ENCODE measurements at regions of chr1 and their contacts with region 1.

Region 1: DNA sequence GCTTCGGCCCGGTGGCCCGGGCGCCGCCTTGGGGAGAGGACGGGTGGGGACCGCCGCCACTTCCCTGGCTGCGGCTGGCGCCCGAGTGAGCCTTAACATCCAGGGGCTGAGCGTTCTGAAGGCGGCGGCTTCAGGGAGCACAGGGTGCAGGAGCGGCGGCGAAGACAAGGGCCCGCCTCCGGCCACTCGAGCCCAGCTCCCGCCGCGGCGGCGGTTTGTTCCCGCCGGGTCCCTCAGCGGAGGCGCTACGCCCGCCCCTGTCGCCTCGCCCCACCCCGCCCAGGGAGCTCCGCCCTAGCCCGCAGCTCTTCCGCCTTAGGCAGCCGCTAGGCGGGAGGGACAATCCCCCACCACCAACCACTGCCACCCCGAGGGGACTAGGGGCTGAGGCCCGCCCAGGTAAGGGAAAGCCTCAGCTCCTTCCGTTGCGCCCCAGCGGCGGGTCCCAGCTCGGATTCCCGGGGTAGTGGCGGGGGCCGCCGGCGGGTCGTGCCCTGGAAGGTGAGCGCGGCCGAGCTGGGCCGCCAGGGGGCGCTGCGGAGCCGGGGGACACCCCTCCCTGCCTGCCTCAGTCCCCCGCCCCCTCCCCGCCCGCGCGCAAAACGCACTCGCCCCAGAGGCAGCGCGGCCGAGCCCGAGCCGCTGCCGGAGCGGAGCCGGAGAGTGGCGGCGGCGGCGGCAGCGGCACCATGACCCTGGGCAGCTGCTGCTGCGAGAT is at the start of gene FOXD2:
- DNase-seq: peak; percentile 95
- ATAC-seq: peak; percentile 90
- H3K4me3 Mint-ChIP-seq: peak within 1 kb of the TSS; percentile 93
- H3K27ac Mint-ChIP-seq: peak within 1 kb of the TSS; percentile 88
- H3K4me1 Mint-ChIP-seq: peaks cover 34% of the 10 kb centered on the region
- H3K27me3 Mint-ChIP-seq: peaks cover 28% of the 10 kb centered on the region
- total RNA-seq, gene FOXD2: 0.24 to 0.31 TPM

Region 2: DNA sequence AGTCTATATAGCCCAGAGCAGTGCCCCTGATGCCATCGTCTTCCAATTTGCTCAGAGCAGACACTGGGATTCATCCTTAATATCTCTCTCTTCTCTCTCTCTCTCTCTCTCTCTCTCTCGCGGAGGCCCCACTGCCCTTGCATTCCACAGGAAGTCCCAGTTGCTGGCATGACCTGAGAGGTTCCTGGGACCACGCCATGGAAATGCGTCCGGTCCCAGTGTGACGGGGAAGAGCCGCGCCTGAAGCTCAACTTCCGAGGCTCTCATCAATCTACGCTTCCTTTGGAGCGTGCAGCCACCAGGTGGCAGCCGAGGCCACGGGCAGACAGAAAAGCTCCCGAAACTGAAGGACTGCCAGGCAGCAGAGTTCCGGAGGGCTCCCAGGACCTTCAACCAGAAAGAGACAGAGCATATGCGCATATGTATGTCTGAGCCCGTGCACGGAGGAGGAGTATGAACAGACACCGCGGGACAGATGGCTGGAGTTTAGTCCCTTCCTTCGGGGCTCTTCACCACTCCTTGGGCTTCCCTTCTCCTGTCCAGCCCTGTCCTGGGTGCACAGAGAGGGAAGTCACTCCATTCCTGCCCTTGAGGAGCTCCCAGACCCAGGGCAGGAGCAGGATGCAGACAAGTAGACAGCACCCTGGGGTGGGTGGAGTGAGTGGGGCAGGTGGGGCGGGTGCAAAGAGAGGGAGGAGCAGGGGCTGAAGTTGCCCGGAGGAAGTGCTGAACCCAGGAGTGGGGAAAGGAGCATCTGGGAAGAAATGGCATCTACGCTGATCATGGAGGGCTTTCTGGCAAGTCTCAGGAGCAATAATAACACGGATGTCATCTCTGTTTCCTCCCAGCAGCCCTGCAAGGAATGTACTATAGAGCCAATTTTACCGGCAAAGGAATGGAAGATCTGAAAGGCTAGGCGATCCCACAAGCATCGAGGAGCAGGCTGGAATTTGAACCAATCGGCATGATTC is 258.3 kb before region 1 on chr1:
- CTCF ChIA-PET with region 1: interaction called, 15 read pairs
- POLR2A ChIA-PET with region 1: no interaction called
- DNase-seq: peak; percentile 85
- ATAC-seq: peak; percentile 85
- H3K4me3 Mint-ChIP-seq: peak overlapping the region; percentile 80
- H3K27ac Mint-ChIP-seq: peak overlapping the region; percentile 88
- H3K4me1 Mint-ChIP-seq: peaks cover 8% of the 10 kb centered on the region
- H3K27me3 Mint-ChIP-seq: peaks cover 26% of the 10 kb centered on the region

Region 3: GRCh38 chr1:47409311-47410070 is 28.1 kb before region 1 on chr1:
- CTCF ChIA-PET with region 1: interaction called, 14 read pairs
- POLR2A ChIA-PET with region 1: no interaction called
- DNase-seq: no peak
- ATAC-seq: no peak
- H3K4me3 Mint-ChIP-seq: no peak overlapping the region
- H3K27ac Mint-ChIP-seq: no peak overlapping the region
- H3K4me1 Mint-ChIP-seq: no peaks in the 10 kb centered on the region
- H3K27me3 Mint-ChIP-seq: peaks cover 35% of the 10 kb centered on the region

Region 4: DNA sequence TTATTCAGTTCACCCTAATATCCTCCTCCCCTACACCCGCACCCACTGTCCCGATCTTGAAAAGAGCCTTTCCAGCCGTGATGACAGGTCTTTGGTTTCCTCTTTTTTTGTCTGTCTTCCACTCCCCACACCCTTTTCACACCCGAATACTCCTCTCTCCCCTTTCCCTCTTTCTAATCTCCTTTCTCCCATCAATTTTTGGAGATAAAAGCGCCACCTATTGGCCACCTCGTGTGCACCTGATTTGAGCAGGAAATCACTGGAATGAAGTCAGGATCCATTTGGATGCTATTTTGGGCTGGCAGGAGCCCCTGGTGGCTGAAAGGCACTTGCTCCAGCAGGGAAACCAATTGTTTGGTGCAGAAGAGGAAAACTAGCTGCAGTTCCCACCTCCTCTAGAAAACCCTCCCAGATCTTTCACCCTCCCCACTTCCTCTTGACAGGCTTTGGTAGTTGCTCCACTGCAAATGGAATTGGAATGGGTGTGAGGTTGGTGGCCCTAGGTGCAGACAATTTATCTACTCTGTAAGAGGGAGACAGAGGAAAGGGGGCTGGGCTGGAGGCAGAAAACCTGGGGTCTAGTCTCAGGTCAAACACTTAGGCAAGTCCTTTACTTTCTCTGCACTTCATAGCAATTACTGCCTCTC is 13.1 kb before region 1 on chr1:
- CTCF ChIA-PET with region 1: interaction called, 11 read pairs
- POLR2A ChIA-PET with region 1: no interaction called
- DNase-seq: no peak
- ATAC-seq: no peak
- H3K4me3 Mint-ChIP-seq: no peak overlapping the region
- H3K27ac Mint-ChIP-seq: no peak overlapping the region
- H3K4me1 Mint-ChIP-seq: no peaks in the 10 kb centered on the region
- H3K27me3 Mint-ChIP-seq: peaks cover 11% of the 10 kb centered on the region

Region 5: GRCh38 chr1:47478090-47478489 is 40.5 kb after region 1 on chr1:
- CTCF ChIA-PET with region 1: no interaction called
- POLR2A ChIA-PET with region 1: no interaction called
- DNase-seq: no peak
- ATAC-seq: no peak
- H3K4me3 Mint-ChIP-seq: no peak overlapping the region
- H3K27ac Mint-ChIP-seq: no peak overlapping the region
- H3K4me1 Mint-ChIP-seq: no peaks in the 10 kb centered on the region
- H3K27me3 Mint-ChIP-seq: peaks cover 9% of the 10 kb centered on the region

Region 6: GRCh38 chr1:47637111-47637685 is 199.6 kb after region 1 on chr1:
- CTCF ChIA-PET with region 1: no interaction called
- POLR2A ChIA-PET with region 1: no interaction called
- DNase-seq: no peak
- ATAC-seq: no peak
- H3K4me3 Mint-ChIP-seq: no peak overlapping the region
- H3K27ac Mint-ChIP-seq: no peak overlapping the region
- H3K4me1 Mint-ChIP-seq: no peaks in the 10 kb centered on the region
- H3K27me3 Mint-ChIP-seq: peaks cover 3% of the 10 kb centered on the region

Region 7: DNA sequence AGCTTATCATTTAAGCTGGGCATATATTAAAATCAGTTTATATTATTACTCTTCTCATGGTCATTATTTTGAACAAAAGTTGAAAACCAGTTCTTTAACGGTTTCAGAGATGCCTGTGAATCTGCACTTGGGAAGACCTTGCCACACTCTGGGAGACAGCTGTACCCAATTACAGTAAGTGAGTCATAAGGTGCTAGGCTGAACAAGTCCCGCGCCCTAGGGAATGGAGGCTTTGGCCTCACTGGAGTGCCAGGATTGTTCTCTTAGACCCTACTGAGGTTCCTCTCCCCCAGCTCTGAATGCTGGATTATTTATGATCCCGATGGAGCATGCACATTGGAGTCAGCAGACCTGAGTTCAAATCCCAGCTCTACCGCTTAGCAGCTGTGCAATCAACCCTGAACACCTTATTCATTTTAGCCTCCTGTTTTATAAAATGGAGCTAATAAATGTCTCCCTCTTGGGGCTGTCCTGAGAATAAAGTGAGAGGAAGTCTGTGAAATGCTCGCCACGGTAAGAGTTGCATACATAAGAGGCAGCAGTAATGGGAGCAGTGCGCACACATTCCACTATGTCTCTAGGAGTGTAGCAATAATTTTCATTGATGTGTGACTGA is 266.5 kb after region 1 on chr1:
- CTCF ChIA-PET with region 1: interaction called, 71 read pairs
- POLR2A ChIA-PET with region 1: no interaction called
- DNase-seq: no peak
- ATAC-seq: no peak
- H3K4me3 Mint-ChIP-seq: no peak overlapping the region
- H3K27ac Mint-ChIP-seq: no peak overlapping the region
- H3K4me1 Mint-ChIP-seq: peaks cover 1% of the 10 kb centered on the region
- H3K27me3 Mint-ChIP-seq: peaks cover 26% of the 10 kb centered on the region

Region 8: DNA sequence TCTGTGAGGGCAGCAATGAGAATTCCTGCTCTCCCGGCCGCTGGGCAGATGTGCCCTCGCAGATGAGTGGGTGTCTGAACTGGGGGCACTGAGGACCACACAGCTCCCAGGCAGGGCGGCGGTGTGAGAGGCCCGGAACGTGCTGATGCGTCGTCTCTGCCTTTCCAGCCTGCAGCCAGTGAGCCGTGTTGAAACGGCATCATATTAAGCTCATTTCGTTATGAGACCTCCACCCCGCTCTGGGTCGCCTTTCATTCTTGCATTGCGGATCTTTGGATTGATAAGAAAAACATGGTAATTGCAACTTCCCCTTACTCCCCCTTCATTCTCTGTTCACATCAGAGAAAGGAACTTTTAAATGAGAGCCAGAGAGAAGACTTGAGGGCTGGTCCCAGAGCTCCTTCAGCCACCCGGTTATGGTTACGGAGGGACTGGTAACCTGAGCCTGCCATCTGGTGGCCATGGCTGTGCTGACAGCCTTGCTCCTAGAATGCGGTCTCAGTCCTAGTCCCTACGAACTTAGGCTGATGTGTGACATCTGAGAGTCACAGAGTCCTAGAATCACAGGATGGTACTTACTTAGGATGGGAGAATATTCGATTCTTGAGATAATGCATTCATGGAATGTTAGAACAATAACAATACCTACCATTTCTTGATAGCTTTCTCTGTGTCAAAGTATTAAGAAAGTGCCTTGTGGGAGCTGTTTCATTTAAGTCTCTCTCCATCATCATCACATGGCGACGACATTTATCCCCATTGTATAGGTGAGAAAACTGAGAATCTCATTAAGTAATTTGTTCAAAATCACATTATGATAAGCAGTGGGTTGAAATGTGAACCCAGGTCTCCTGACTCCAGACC is 288.6 kb after region 1 on chr1:
- CTCF ChIA-PET with region 1: interaction called, 43 read pairs
- POLR2A ChIA-PET with region 1: interaction called, 3 read pairs
- DNase-seq: peak; percentile 75
- ATAC-seq: peak; percentile 89
- H3K4me3 Mint-ChIP-seq: no peak overlapping the region
- H3K27ac Mint-ChIP-seq: no peak overlapping the region
- H3K4me1 Mint-ChIP-seq: peaks cover 6% of the 10 kb centered on the region
- H3K27me3 Mint-ChIP-seq: peaks cover 35% of the 10 kb centered on the region

Measured in activated CD8-positive, alpha-beta T cell treated with anti-CD3 and anti-CD28 coated beads, Interleukin-2, amount 10 ng/mL, durations not matched to agents 7 days and 5 days (primary cell).